Activated CD4-positive, alpha-beta memory T cell treated with anti-CD3 and anti-CD28 coated beads, Interleukin-2, amount 10 ng/mL, durations not matched to agents 7 days and 5 days (primary cell): ENCODE measurements at regions of chr3 and their contacts with region 1.

Region 1: DNA sequence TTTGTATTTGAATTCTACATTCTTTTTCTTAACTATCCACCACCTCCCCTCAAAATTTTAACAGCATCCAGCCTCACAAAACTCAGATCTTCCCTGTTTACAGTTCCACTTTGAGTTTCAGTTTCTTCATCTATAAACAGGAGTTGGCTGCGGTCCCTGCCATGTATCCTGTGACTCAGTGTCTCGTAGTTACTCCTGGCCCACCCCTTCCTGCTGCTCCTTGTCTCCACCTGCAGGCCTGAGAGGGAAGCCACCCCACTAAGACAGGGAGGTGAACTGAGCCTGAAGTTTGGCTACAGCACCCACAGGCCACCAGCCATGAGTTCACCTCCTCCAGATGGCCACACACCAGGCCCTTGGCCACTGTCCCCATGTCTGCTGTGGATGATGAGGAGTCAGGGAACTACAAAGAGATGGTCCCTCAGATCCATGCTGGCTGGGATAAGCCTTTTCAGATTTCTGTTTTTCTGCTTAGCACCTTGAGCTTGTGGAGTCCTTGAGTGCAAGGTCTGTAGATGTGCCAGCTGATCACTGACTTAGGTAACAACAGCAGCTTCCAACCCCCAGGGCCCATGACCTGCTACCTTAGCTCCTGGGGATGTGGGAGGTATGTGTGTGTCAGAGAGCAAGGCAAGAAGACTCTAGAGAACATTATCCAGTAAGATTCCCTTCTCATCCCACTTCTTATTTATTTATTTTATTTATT is 37.5 kb downstream of the CD86 start:
- DNase-seq: peak; percentile 86
- H3K4me3 Mint-ChIP-seq: peak overlapping the region; percentile 61
- H3K27ac Mint-ChIP-seq: peak overlapping the region; percentile 96
- H3K4me1 Mint-ChIP-seq: peaks cover 68% of the 10 kb centered on the region
- H3K27me3 Mint-ChIP-seq: no peaks in the 10 kb centered on the region

Region 2: GRCh38 chr3:121995161-121996137 is 97.2 kb before region 1 on chr3:
- CTCF ChIA-PET with region 1: interaction called, 13 read pairs
- POLR2A ChIA-PET with region 1: no interaction called
- DNase-seq: peak; percentile 47
- H3K4me3 Mint-ChIP-seq: no peak overlapping the region
- H3K27ac Mint-ChIP-seq: peak overlapping the region; percentile 75
- H3K4me1 Mint-ChIP-seq: peaks cover 52% of the 10 kb centered on the region
- H3K27me3 Mint-ChIP-seq: no peaks in the 10 kb centered on the region

Region 3: GRCh38 chr3:122074621-122075265 is 17.9 kb before region 1 on chr3:
- CTCF ChIA-PET with region 1: interaction called, 68 read pairs
- POLR2A ChIA-PET with region 1: interaction called, 568 read pairs
- DNase-seq: peak; percentile 79
- H3K4me3 Mint-ChIP-seq: peak overlapping the region; percentile 84
- H3K27ac Mint-ChIP-seq: peak overlapping the region; percentile 95
- H3K4me1 Mint-ChIP-seq: peaks cover 64% of the 10 kb centered on the region
- H3K27me3 Mint-ChIP-seq: no peaks in the 10 kb centered on the region

Region 4: DNA sequence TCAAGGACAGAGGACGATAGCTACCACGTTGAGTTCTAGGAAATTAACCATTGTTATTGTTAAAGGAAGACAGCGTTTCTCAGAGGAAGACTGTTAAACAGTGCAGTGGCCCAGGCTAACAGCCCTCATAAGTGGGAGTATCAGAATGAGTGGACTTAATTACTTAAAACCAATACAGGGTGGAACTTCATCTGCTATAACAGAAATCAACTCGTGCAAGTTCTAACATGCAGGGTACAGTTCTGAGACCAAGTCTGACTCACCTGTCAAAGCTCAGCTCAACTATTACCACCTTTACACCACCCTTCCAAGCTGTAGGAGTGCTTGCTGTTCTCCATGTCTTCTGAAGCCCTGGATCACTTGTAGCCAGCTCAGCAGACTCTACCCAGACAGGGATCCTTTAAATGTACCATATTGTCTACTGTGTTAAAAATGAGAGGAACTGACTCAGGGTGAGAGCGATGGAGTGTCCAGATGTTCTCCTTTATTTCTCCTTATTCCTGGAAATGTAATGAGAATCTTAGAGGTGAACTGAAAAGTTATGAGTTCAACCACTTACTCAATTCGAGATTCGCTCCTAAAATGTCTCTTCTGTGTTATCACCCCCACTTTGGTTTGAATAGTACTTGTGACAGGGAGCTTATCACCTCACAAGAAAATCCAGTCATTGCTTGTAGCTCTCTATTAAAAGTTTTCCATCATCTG is 10.9 kb before region 1 on chr3:
- CTCF ChIA-PET with region 1: interaction called, 89 read pairs
- POLR2A ChIA-PET with region 1: interaction called, 568 read pairs
- DNase-seq: no peak
- H3K4me3 Mint-ChIP-seq: peak overlapping the region; percentile 30
- H3K27ac Mint-ChIP-seq: peak overlapping the region; percentile 83
- H3K4me1 Mint-ChIP-seq: peaks cover 97% of the 10 kb centered on the region
- H3K27me3 Mint-ChIP-seq: no peaks in the 10 kb centered on the region

Region 5: DNA sequence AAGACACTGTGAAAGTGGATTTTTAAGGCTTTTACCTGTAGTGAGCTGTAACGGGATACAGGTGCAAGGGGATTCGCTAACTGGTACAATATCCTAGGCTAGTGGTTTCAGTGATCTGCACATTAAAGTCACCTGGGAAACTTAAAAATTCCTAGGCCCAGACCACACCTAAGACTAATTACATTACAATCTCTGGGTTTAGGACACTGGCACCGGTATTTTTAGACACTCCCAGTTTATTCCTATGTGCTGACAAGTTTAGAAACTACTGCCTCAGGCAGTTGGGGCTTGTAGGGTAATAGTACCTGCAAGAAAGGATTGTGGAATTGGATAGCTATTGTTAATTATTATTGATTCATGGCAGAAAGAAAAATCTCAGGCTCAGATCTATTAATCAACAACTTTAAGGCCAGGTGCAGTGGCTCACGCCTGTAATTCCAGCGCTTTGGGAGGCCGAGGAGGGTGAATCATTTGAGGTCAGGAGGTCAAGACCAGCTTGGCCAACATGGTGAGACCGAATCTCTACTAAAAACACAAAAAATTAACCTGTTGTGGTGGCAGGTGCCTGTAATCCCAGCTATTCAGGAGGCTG is 40.4 kb after region 1 on chr3:
- CTCF ChIA-PET with region 1: no interaction called
- POLR2A ChIA-PET with region 1: no interaction called
- DNase-seq: no peak
- H3K4me3 Mint-ChIP-seq: no peak overlapping the region
- H3K27ac Mint-ChIP-seq: no peak overlapping the region
- H3K4me1 Mint-ChIP-seq: peaks cover 6% of the 10 kb centered on the region
- H3K27me3 Mint-ChIP-seq: peaks cover 8% of the 10 kb centered on the region